Panc1 (cell line): ENCODE measurements at regions of chr7 and their contacts with region 1.

Region 1: DNA sequence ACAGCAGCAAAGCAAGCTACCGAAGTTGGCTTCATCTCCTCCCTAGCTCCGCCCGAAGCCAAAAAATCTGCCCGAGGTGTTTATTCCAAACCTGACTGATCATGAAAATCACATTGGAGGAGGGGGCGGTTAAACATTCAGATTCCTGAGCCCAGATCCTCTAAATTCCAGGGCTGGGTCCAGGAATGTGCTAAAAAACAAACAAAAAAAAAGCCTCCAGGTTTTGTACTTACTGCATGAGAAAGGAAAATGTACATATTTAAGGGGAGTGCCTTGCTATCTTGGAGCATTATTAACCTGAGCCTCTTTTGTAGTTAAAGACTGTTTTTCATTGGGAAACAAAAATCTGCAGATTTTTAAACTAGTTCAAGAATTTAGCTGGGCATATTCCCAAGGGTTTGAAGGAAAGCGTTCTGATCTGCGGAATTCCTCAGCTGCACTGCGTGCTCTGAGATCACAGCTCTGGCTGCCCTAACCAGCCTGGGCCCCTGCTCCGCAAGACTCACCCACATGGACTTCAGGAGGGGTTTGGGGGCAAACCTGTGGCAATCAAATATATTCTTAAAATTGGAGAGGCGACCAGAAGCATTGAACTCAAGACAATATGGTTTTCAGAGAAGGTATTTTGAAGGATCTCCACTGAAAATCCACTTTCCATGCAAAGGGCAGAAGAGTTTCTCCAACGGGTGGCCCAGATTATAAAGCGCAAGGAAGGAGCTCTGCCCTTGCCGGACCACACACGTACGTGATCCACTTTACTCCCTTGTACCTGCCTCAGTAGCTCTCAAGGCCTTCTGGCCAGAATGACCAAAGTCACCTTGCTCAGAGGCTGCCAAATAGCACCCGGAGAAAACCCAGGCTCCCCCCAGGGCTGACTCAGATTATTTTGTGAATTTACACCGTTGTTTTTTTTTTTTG is 10.0 kb upstream of the TNS3 start:
- DNase-seq: no peak
- ATAC-seq: peak; percentile 49
- H3K4me3 ChIP-seq: no peak overlapping the region
- H3K27ac ChIP-seq: peak overlapping the region; percentile 100
- H3K4me1 ChIP-seq: peaks cover 53% of the 10 kb centered on the region
- H3K27me3 ChIP-seq: no peaks in the 10 kb centered on the region
- CTCF ChIP-seq: no peak

Region 2: DNA sequence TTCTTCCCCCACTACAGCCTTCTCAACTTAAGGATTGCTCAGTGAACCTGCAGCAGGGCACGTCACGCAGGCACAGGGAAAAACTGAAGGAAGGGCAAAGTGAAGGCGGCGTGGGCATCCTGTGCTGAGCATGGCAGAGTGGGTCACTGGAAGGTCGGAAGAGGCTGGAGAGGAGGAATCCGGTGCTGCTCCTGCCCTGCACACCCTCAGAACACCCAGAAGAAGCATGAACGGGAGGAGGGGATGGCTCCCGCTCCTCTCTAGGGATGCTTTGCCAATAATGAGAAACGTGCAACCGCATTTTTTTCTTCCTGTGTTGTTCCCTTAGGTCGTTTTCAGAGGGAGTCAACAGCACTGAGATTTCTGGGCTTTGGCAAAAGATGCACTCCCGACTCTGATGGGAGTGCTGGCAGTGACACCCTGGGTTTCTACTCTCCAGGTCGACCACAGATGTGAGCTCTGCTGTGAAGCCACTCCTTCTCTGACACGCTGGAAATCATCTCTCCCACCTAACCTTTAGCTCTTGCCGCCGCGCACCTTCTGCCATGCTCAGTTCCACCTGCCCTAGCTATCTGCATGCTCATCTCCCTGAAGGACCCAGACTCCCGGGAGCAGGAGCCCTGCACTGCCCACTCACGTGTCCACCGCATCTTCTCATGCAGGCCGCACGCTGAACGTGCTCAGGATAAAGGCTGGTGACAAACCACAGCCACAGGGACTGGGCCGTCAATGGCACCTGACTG is 184.9 kb before region 1 on chr7:
- CTCF ChIA-PET with region 1: no interaction called
- POLR2A ChIA-PET with region 1: interaction called, 11 read pairs
- in situ Hi-C with region 1: no loop called
- intact Hi-C with region 1: no loop called
- DNase-seq: no peak
- ATAC-seq: no peak
- H3K4me3 ChIP-seq: no peak overlapping the region
- H3K27ac ChIP-seq: peak overlapping the region; percentile 55
- H3K4me1 ChIP-seq: peaks cover 65% of the 10 kb centered on the region
- H3K27me3 ChIP-seq: no peaks in the 10 kb centered on the region
- CTCF ChIP-seq: no peak